Activated naive CD4-positive, alpha-beta T cell treated with anti-CD3 and anti-CD28 coated beads for 36 hours (primary cell): ENCODE measurements at regions of chr9 and their contacts with region 1.

Region 1: DNA sequence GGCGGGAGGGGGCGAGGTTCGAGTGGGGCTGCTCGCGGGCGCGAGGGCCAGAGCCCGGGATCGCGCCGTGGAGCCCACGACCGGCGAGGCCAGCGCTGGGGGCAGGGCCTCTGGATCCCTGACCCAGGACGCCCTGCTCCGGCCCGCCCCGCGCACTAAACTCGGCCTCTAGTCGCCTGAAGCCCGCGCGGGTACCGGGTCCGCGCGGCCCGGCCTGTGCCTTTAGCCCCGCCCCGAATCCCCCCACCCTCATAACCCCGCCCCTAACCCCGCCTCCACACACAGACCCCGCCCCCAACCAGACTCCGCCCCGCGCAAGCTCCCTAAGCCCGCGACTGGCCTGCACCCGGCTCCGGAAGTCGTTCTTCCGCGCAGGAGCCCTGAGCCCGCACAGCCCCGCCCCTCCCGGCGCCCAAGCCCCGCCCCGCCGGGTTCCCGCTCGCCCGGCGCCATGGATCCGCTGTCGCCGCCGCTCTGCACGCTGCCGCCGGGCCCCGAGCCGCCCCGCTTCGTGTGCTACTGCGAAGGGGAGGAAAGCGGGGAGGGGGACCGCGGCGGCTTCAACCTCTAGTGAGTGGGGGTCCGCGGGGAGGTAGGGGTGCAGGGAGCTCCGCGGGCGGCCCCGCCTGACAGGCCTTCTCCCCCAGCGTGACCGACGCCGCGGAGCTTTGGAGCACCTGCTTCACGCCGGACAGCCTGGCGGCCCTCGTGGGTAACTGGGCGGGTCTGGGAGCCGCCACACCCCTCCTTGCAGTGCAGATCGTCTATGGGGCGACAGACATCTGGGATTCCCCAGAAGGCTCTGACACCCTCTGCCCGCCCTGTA is at the start of gene PAXX:
- DNase-seq: peak; percentile 95
- H3K4me3 Mint-ChIP-seq: peak within 1 kb of the TSS; percentile 83
- H3K27ac Mint-ChIP-seq: peak within 1 kb of the TSS; percentile 81
- H3K4me1 Mint-ChIP-seq: peaks cover 16% of the 10 kb centered on the region
- H3K27me3 Mint-ChIP-seq: peaks cover under 1% of the 10 kb centered on the region
- total RNA-seq, gene PAXX: 75.9 to 76.8 TPM

Region 2: GRCh38 chr9:136949817-136950655 is 42.2 kb before region 1 on chr9:
- CTCF ChIA-PET with region 1: interaction called, 3 read pairs
- intact Hi-C with region 1: loop called (anchors 1 kb)
- DNase-seq: peak; percentile 98
- H3K4me3 Mint-ChIP-seq: peak overlapping the region; percentile 82
- H3K27ac Mint-ChIP-seq: peak overlapping the region; percentile 72
- H3K4me1 Mint-ChIP-seq: peaks cover under 1% of the 10 kb centered on the region
- H3K27me3 Mint-ChIP-seq: no peaks in the 10 kb centered on the region